ENCODE measurements at regions of chr17 and their contacts with region 1.

Region 1: GRCh38 chr17:30104575-30105339 is 11.9 kb upstream of the NSRP1 start:
- DNase-seq: peak; percentile 64 to 90 (median 72)
- ATAC-seq: peak; percentile 99
- H3K4me3 ChIP-seq: no peak overlapping the region
- H3K4me1 ChIP-seq: no peaks in the 10 kb centered on the region
- CTCF ChIP-seq: peak; percentile 80

Region 2: DNA sequence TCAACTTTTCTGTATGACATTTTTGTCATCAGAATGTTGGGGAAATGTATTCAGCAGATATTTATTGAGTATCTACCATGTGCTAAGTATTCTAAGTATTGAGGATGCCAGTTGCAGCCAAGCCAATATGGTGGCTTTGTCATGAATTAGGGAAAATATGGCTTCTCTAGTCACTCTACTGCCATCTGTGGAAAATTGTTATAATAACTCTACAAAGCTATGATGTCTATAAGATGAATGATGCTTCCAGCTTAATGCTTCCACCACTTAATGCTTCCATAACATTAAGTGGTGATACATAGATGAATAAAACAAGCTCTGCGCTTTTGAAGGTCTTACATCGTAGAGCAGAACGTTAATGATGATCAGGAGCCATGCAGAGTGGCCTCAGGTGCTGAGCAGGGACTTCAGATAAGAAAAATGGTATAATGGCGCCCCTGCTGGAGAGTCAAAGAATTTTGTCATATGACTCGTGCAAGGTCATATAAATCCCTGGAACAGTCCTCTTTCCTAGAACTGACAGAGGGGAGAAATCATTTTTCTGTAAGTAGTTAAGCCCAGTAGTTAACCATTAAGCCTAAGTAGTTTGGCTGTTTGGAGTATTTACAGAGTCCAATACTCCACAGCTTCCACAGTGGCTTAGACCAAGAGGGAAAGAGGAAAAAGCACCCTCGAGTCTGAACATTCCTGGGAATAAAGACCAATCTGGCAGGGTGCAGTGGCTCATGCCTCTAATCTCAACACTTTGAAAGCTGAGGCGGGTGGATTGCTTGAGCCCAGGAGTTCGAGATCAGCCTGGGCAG is 231.8 kb after region 1 on chr17:
- intact Hi-C with region 1: loop called in 1 of 2 experiments (anchors 10 kb)
- DNase-seq: peak in 1 of 3 donors; percentile 72
- ATAC-seq: peak; percentile 78
- H3K4me3 ChIP-seq: no peak overlapping the region
- H3K4me1 ChIP-seq: peaks cover 26% of the 10 kb centered on the region
- CTCF ChIP-seq: peak; percentile 30

Region 3: GRCh38 chr17:30493780-30494179 is 389.0 kb after region 1 on chr17:
- intact Hi-C with region 1: no loop called
- DNase-seq: no peak
- ATAC-seq: no peak
- H3K4me3 ChIP-seq: no peak overlapping the region
- H3K4me1 ChIP-seq: no peaks in the 10 kb centered on the region
- CTCF ChIP-seq: no peak

Measured in mucosa of descending colon (tissue), 3 donors.